ENCODE measurements at regions of chr20 and their contacts with region 1.

Region 1: DNA sequence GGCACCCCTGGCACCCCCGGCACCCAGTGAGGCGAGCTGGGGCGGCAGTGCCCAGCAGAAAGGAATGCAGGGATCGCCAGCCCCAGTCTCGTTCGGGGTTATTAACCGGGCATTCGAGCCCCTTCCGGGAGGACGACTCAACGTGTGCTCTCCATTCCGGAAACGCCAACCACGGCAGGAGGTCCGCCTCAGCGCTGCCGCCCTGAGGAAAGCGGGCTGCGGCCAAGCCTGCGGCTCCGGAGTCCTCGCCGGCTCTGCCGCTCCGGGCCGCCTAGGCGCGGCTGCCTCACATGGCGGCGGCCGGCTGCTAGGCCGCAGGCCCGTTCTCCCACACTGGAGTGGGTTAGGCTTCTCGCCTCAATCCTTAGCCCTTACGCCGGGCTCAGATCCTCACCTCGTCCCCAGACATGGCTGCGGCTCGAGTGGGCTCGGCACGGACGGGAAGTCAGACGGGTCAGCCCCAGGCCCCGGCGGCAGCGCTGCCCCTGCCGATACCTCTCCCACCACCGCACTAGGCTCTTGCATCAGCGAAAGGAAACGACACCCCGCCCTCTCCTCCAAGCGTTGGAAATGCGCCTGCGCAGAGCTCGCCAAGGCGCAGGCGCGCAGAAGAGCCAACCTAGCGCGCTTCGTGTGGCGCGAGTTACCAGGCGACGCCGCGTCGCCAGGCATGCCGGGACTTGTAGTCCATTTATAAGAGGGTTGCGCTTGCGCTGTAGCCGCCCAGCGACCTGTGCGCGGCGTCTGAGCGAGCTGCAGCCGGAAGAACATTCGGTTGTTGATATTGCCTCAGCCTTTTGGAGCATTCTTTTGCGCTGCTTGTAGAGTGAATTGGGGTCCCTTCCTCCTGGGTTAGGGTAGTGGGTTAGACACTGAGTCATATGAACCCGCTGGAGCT is at the start of gene EIF2S2:
- DNase-seq: peak; percentile 91 to 97
- ATAC-seq: peak; percentile 92 to 95
- H3K4me3 ChIP-seq: peak within 1 kb of the TSS; percentile 82 to 95 (median 83)
- H3K27ac ChIP-seq: peak within 1 kb of the TSS; percentile 90 to 98 (median 97)
- H3K4me1 ChIP-seq: peaks cover 27 to 41% of the 10 kb centered on the region in 2 donors
- H3K27me3 ChIP-seq: no peaks in the 10 kb centered on the region
- CTCF ChIP-seq: no peak
- POLR2A ChIP-seq: peak; percentile 95 to 98
- total RNA-seq, gene EIF2S2: 79.0 to 85.2 (median 83.9) TPM

Region 2: DNA sequence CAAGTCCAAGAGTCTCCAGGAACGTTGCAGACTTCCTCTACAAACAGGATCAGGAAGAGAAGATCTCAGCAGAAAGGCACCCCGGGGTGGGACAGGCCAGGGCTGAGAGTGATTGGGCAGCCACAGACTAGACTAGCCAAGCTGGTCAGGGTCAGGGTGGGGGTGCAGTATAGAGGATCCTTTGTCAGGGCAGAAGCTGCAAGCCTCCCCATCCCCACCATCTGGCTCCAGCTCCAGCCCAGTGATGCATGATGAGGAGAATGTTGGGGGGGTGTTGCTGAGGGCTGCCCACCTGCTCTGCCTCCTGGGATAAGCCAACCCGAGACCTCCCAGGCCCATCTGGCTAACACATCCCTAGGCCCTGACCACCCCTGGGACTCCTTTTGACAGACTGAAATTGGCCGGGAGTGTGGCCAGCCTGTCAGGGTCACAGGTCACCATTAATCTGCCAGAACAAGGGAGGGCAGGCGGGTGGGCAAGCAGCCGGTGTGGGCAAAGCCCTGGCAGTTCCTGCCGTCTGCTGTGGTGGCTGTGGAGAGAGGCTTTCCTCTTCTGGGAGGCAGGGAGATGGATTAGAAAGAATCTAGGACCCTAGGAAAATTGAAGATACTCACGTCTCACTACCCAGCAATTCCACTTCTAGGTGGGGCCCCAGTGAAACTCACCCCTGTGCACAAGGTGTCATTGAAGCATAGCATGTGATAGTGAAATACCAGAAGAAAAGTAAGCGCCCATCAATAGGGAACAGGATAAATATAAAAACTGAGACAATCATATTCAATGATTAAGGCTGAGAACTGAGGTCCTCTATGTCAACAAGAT is 646.3 kb before region 1 on chr20:
- in situ Hi-C with region 1: loop called in 1 of 4 experiments (anchors 25 kb)
- intact Hi-C with region 1: no loop called
- DNase-seq: no peak
- ATAC-seq: no peak
- H3K4me3 ChIP-seq: no peak overlapping the region
- H3K27ac ChIP-seq: no peak overlapping the region
- H3K4me1 ChIP-seq: no peaks in the 10 kb centered on the region
- H3K27me3 ChIP-seq: no peaks in the 10 kb centered on the region
- CTCF ChIP-seq: no peak
- POLR2A ChIP-seq: no peak

Region 3: GRCh38 chr20:34045294-34045693 is 66.7 kb before region 1 on chr20:
- in situ Hi-C with region 1: no loop called
- intact Hi-C with region 1: loop called (anchors 5 kb)
- DNase-seq: peak; percentile 28 to 35
- ATAC-seq: no peak
- H3K4me3 ChIP-seq: no peak overlapping the region
- H3K27ac ChIP-seq: peak overlapping the region in 2 of 4 donors; percentile 3 to 26
- H3K4me1 ChIP-seq: peaks cover 71 to 87% of the 10 kb centered on the region in 2 donors
- H3K27me3 ChIP-seq: no peaks in the 10 kb centered on the region
- CTCF ChIP-seq: no peak
- POLR2A ChIP-seq: no peak

Region 4: GRCh38 chr20:34083137-34083536 is 28.8 kb before region 1 on chr20:
- in situ Hi-C with region 1: no loop called
- intact Hi-C with region 1: loop called (anchors 1 kb)
- DNase-seq: peak; percentile 85 to 88
- ATAC-seq: peak; percentile 82 to 86
- H3K4me3 ChIP-seq: no peak overlapping the region
- H3K27ac ChIP-seq: peak overlapping the region; percentile 58 to 75 (median 72)
- H3K4me1 ChIP-seq: peaks cover 19 to 23% of the 10 kb centered on the region in 2 donors
- H3K27me3 ChIP-seq: no peaks in the 10 kb centered on the region
- CTCF ChIP-seq: peak in 2 of 5 experiments; percentile 15 to 26
- POLR2A ChIP-seq: no peak

Region 5: DNA sequence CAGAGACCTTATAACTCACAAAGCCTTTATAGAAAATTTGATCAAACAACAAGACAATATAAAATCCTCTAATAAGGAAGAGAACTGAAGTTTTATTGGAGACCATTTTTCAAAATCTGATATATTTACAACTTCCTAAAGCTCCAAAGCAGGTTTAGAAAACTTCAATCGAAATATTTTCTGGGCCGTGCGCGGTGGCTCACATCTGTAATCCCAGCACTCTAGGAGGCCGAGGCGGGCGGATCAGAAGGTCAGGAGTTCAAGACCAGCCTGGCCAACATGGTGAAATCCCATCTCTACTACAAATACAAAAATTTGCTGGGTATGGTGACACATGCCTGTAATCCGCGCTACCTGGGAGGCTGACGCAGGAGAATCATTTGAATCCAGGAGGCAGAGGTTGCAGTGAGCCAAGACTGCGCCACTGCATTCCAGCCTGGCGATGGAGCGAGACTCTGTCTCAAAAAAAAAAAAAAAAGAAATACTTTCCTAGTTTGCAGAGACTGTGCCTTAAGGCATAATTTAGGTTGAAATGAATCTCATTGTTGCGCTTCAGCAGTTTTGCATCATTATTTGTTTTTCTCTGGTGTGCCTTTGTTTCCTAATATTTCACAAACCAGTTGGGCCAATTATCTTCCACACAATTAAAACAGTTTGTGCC is 68.6 kb after region 1 on chr20:
- in situ Hi-C with region 1: no loop called
- intact Hi-C with region 1: no loop called
- DNase-seq: no peak
- ATAC-seq: no peak
- H3K4me3 ChIP-seq: no peak overlapping the region
- H3K27ac ChIP-seq: no peak overlapping the region
- H3K4me1 ChIP-seq: no peaks in the 10 kb centered on the region
- H3K27me3 ChIP-seq: peaks cover 0 to 7% (median 5%) of the 10 kb centered on the region in 3 donors
- CTCF ChIP-seq: no peak
- POLR2A ChIP-seq: no peak